ENCODE measurements at regions of chr10 and their contacts with region 1.

Region 1: DNA sequence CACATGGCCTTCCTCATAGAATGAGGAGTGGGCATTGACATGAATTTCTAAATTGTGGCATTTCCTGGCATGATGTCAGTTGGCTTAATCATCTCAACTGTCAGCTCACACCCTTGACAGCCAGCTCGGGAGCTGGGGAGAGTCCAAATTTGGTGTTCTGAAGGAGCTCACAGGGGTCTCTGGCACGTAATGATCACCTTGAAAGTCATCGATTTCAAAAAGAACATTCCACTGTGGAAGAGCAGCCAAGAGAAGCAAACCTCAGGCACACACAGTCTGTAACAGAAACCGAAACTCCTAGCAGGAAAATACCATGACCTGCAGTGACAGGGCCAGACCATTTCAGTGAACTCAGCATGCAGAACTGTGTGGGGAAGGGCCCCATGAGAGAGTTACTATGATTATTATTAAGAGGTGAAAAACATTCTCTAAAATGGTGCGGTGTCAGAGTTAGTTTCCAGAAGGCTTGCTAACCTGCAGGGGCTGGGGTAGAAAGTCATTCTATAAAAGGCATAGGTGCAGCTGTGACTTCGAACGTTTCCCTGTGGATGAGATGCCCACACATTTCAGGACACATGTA is 26.4 kb upstream of the KLF6 start:
- DNase-seq: no peak

Region 2: DNA sequence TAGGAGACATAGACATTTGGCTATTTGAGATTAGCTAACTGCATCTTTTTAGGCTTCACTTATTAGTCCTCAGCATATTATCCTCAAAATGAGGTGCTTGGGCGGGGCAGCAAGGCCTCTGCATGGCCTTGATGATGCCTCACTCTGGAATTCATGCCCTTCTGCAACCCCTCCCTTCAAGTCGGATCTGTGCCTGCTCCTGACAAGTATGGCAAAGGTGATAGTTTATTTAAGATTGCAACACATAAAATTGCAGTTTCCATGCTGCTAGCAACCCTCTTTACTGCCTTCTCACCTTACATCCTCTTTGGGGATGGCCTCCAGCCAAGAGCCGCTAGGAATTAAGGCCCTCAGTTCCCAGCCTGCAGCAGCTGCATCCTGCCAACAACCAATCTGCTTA is 1832.8 kb before region 1 on chr10:
- intact Hi-C with region 1: no loop called
- DNase-seq: no peak

Region 3: DNA sequence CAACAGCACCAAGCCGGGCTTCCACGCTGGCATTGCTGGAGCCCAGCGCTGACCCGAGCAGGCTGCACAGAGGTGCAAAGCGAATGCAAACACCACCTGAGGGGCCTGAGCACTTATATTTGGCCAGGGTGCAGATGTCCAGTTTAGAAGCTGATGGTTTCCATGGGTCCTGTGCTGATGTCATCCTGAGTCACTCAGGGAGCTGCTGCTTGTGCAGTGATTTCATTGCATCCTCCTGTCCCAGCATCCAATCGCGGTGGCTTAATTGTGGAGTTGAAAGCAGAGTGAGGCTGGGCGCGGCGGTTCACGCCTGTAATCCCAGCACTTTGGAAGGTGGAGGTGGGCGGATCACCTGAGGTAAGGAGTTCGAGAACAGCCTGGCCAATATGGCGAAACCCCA is 383.8 kb after region 1 on chr10:
- intact Hi-C with region 1: loop called in 1 of 2 experiments (anchors 10 kb)
- DNase-seq: no peak

Region 4: GRCh38 chr10:5446390-5446926 is 1635.1 kb after region 1 on chr10:
- intact Hi-C with region 1: no loop called
- DNase-seq: peak; percentile 97

Measured in posterior vena cava (tissue), 2 donors.